ENCODE measurements at regions of chrX and their contacts with region 1.

Region 1: GRCh38 chrX:70454441-70455365 is 10.1 kb downstream of the DLG3 start:
- DNase-seq: peak; percentile 87
- H3K4me3 ChIP-seq: peak overlapping the region; percentile 53
- H3K27ac ChIP-seq: peak overlapping the region; percentile 76
- H3K4me1 ChIP-seq: no peaks in the 10 kb centered on the region
- H3K27me3 ChIP-seq: no peaks in the 10 kb centered on the region
- CTCF ChIP-seq: peak; percentile 91

Region 2: DNA sequence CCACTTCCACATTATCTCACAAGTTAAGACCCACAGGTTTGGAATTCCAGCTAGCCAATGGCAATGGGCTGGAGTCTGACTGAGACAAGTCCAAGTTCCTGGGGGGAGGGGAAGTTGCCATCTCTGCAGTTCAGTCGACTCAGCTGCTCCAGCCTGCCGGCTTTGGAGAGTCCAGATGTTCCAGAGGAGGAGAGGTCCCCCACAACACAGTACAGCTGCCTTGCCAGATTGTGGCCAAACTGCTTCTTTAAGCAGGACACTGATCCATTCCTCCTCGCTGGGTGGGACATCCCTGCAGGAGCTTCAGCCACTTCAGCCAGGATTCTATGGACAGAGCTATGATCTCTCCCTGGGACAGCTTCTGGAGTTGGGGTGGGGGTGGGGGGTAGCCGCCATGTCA is 639.6 kb before region 1 on chrX:
- CTCF ChIA-PET with region 1: no interaction called
- POLR2A ChIA-PET with region 1: no interaction called
- intact Hi-C with region 1: no loop called
- DNase-seq: no peak
- H3K4me3 ChIP-seq: no peak overlapping the region
- H3K27ac ChIP-seq: no peak overlapping the region
- H3K4me1 ChIP-seq: no peaks in the 10 kb centered on the region
- H3K27me3 ChIP-seq: no peaks in the 10 kb centered on the region
- CTCF ChIP-seq: no peak

Region 3: GRCh38 chrX:70554081-70554480 is 99.4 kb after region 1 on chrX:
- CTCF ChIA-PET with region 1: no interaction called
- POLR2A ChIA-PET with region 1: no interaction called
- intact Hi-C with region 1: loop called (anchors 2 kb)
- DNase-seq: peak; percentile 17
- H3K4me3 ChIP-seq: no peak overlapping the region
- H3K27ac ChIP-seq: no peak overlapping the region
- H3K4me1 ChIP-seq: no peaks in the 10 kb centered on the region
- H3K27me3 ChIP-seq: no peaks in the 10 kb centered on the region
- CTCF ChIP-seq: peak; percentile 39

Region 4: DNA sequence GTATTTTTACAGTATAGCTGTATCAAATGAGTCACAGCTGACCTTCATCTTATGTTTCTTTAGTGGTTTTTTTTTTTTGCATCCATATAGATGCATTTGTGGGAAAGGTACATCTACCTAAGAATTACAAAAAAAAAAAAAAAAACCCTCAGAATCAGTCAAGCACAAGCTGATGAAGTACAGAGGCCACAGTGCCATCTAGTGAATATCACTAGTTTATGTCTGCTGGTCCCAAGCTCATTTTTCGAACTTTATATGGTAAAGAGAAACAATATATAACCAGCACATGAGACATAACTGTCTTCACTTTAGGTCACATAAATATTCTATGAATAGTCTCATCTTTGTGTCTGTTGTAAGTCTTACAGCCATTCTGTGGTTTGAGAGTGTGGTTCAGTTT is 210.0 kb after region 1 on chrX:
- CTCF ChIA-PET with region 1: interaction called, 4 read pairs
- POLR2A ChIA-PET with region 1: no interaction called
- intact Hi-C with region 1: loop called (anchors 1 kb)
- DNase-seq: peak; percentile 7
- H3K4me3 ChIP-seq: no peak overlapping the region
- H3K27ac ChIP-seq: no peak overlapping the region
- H3K4me1 ChIP-seq: no peaks in the 10 kb centered on the region
- H3K27me3 ChIP-seq: no peaks in the 10 kb centered on the region
- CTCF ChIP-seq: peak; percentile 49; the same call in 1 of the 2 replicates

Region 5: GRCh38 chrX:70762285-70762684 is 307.6 kb after region 1 on chrX:
- CTCF ChIA-PET with region 1: interaction called, 3 read pairs
- POLR2A ChIA-PET with region 1: no interaction called
- intact Hi-C with region 1: loop called (anchors 5 kb)
- DNase-seq: peak; percentile 10
- H3K4me3 ChIP-seq: no peak overlapping the region
- H3K27ac ChIP-seq: no peak overlapping the region
- H3K4me1 ChIP-seq: no peaks in the 10 kb centered on the region
- H3K27me3 ChIP-seq: peaks cover 10% of the 10 kb centered on the region
- CTCF ChIP-seq: 0 out of 2 replicates have a peak, but pooled peaks have one; percentile 20

Region 6: GRCh38 chrX:70970482-70970995 is 515.8 kb after region 1 on chrX:
- CTCF ChIA-PET with region 1: no interaction called
- POLR2A ChIA-PET with region 1: no interaction called
- intact Hi-C with region 1: loop called (anchors 5 kb)
- DNase-seq: peak; percentile 34
- H3K4me3 ChIP-seq: peak overlapping the region; percentile 1
- H3K27ac ChIP-seq: no peak overlapping the region
- H3K4me1 ChIP-seq: no peaks in the 10 kb centered on the region
- H3K27me3 ChIP-seq: no peaks in the 10 kb centered on the region
- CTCF ChIP-seq: peak; percentile 51